ENCODE measurements at regions of chr3 and their contacts with region 1.

Region 1: DNA sequence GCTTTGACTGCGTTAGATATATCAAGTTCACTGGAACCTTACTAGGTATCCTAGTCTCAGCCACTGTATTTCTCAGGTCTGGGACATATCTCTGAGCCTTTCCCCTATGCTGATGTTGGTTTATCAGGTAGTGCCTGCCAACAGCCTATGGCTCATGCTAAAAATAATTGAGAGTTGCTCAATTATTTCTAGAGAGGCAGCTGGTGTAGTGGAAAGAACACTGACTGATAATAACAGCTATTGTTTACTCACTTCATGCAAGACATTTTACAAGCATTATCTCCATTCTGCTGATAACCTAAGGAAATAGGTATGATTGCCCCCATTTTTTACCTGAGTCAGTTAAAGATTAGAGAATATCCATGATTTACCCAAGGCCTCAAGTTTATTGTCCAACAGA is 231.4 kb downstream of the LRRN1 start:
- DNase-seq: peak in 1 of 5 donors; percentile 29
- ATAC-seq: peak; percentile 75 to 85 (median 81)
- H3K4me3 ChIP-seq: no peak overlapping the region
- H3K27ac ChIP-seq: peak overlapping the region in 3 of 12 donors; percentile 15 to 49 (median 27)
- H3K4me1 ChIP-seq: peaks cover 0 to 10% (median 0%) of the 10 kb centered on the region in 12 donors
- H3K27me3 ChIP-seq: no peaks in the 10 kb centered on the region
- CTCF ChIP-seq: no peak
- POLR2A ChIP-seq: no peak

Region 2: GRCh38 chr3:3665961-3666640 is 364.5 kb before region 1 on chr3:
- intact Hi-C with region 1: loop called in 1 of 10 experiments (anchors 10 kb)
- DNase-seq: peak; percentile 14 to 76 (median 66)
- ATAC-seq: peak; percentile 55 to 91 (median 85)
- H3K4me3 ChIP-seq: no peak overlapping the region
- H3K27ac ChIP-seq: no peak overlapping the region
- H3K4me1 ChIP-seq: peaks cover 0 to 4% (median 0%) of the 10 kb centered on the region in 12 donors
- H3K27me3 ChIP-seq: peaks cover 0 to 4% (median 0%) of the 10 kb centered on the region in 9 donors
- CTCF ChIP-seq: no peak
- POLR2A ChIP-seq: no peak

Region 3: DNA sequence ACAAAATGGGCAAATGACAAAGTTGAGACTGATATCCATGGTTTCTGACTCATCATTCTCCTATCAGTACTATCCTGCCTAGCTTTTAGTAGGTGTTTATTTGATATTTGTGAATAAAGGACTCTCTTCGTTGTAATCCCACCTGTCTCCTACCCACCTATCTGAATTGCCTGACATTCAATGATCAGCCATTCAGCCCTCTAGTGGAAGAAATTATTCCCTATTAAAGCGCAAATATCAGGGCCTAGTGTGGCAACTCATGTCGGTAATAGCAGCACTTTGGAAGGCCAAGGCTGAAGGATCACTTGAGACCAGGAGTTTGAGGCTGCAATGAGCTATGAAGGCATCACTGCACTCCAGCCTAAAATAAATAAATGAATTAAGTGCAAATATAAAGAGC is 76.8 kb after region 1 on chr3:
- intact Hi-C with region 1: no loop called
- DNase-seq: no peak
- ATAC-seq: no peak
- H3K4me3 ChIP-seq: no peak overlapping the region
- H3K27ac ChIP-seq: no peak overlapping the region
- H3K4me1 ChIP-seq: no peaks in the 10 kb centered on the region
- H3K27me3 ChIP-seq: no peaks in the 10 kb centered on the region
- CTCF ChIP-seq: no peak
- POLR2A ChIP-seq: no peak